ENCODE measurements at regions of chr17 and their contacts with region 1.

Region 1: GRCh38 chr17:57898487-57899311 is 48.9 kb upstream of the MRPS23 start:
- DNase-seq: peak; percentile 78
- ATAC-seq: peak; percentile 73 to 83 (median 80)
- H3K4me3 ChIP-seq: no peak overlapping the region
- H3K27ac ChIP-seq: peak overlapping the region; percentile 77 to 97 (median 90)
- H3K4me1 ChIP-seq: peaks cover 44 to 99% (median 83%) of the 10 kb centered on the region in 9 donors
- H3K27me3 ChIP-seq: no peaks in the 10 kb centered on the region
- CTCF ChIP-seq: no peak

Region 2: GRCh38 chr17:57838857-57839570 is 59.7 kb before region 1 on chr17:
- intact Hi-C with region 1: no loop called
- DNase-seq: no peak
- ATAC-seq: peak in 2 of 8 donors; percentile 6 to 31
- H3K4me3 ChIP-seq: no peak overlapping the region
- H3K27ac ChIP-seq: peak overlapping the region; percentile 41 to 82 (median 70)
- H3K4me1 ChIP-seq: peaks cover 0 to 65% (median 12%) of the 10 kb centered on the region in 9 donors
- H3K27me3 ChIP-seq: no peaks in the 10 kb centered on the region
- CTCF ChIP-seq: no peak

Region 3: GRCh38 chr17:57875309-57876115 is 23.2 kb before region 1 on chr17:
- intact Hi-C with region 1: loop called in 1 of 10 experiments (anchors 2 kb)
- DNase-seq: peak; percentile 80 to 82
- ATAC-seq: peak; percentile 84 to 92 (median 88)
- H3K4me3 ChIP-seq: peak overlapping the region in 5 of 10 donors; percentile 25 to 34 (median 27)
- H3K27ac ChIP-seq: peak overlapping the region; percentile 44 to 94 (median 87)
- H3K4me1 ChIP-seq: peaks cover 36 to 86% (median 67%) of the 10 kb centered on the region in 9 donors
- H3K27me3 ChIP-seq: no peaks in the 10 kb centered on the region
- CTCF ChIP-seq: peak; percentile 5 to 58 (median 43)

Region 4: GRCh38 chr17:57939797-57940196 is 41.1 kb after region 1 on chr17:
- intact Hi-C with region 1: loop called in 1 of 10 experiments (anchors 5 kb)
- DNase-seq: peak in 1 of 2 donors; percentile 47
- ATAC-seq: peak in 1 of 8 donors; percentile 3
- H3K4me3 ChIP-seq: no peak overlapping the region
- H3K27ac ChIP-seq: peak overlapping the region in 9 of 10 donors; percentile 36 to 97 (median 77)
- H3K4me1 ChIP-seq: peaks cover 47 to 98% (median 91%) of the 10 kb centered on the region in 9 donors
- H3K27me3 ChIP-seq: no peaks in the 10 kb centered on the region
- CTCF ChIP-seq: no peak

Measured in heart right ventricle (tissue), 16 donors.